ENCODE measurements at regions of chr1 and their contacts with region 1.

Region 1: GRCh38 chr1:156889802-156890585 is 3.5 kb upstream of the PEAR1 start:
- DNase-seq: peak; percentile 79 to 89
- ATAC-seq: peak; percentile 55 to 76 (median 69)
- H3K4me3 ChIP-seq: no peak overlapping the region
- H3K27ac ChIP-seq: no peak overlapping the region
- H3K4me1 ChIP-seq: no peaks in the 10 kb centered on the region
- H3K27me3 ChIP-seq: peaks cover 0 to 29% (median 5%) of the 10 kb centered on the region in 3 donors
- CTCF ChIP-seq: peak; percentile 86

Region 2: GRCh38 chr1:156524481-156524869 is 365.5 kb before region 1 on chr1:
- intact Hi-C with region 1: no loop called
- DNase-seq: no peak
- ATAC-seq: peak in 1 of 4 donors; percentile 17
- H3K4me3 ChIP-seq: no peak overlapping the region
- H3K27ac ChIP-seq: no peak overlapping the region
- H3K4me1 ChIP-seq: no peaks in the 10 kb centered on the region
- H3K27me3 ChIP-seq: no peaks in the 10 kb centered on the region
- CTCF ChIP-seq: no peak

Region 3: GRCh38 chr1:156689035-156689952 is 200.7 kb before region 1 on chr1:
- intact Hi-C with region 1: loop called in 1 of 2 experiments (anchors 10 kb)
- DNase-seq: peak; percentile 76 to 87
- ATAC-seq: peak; percentile 87 to 94 (median 90)
- H3K4me3 ChIP-seq: peak overlapping the region; percentile 48
- H3K27ac ChIP-seq: peak overlapping the region; percentile 12
- H3K4me1 ChIP-seq: peaks cover 16% of the 10 kb centered on the region
- H3K27me3 ChIP-seq: peaks cover 0 to 34% (median 10%) of the 10 kb centered on the region in 3 donors
- CTCF ChIP-seq: peak; percentile 93

Region 4: DNA sequence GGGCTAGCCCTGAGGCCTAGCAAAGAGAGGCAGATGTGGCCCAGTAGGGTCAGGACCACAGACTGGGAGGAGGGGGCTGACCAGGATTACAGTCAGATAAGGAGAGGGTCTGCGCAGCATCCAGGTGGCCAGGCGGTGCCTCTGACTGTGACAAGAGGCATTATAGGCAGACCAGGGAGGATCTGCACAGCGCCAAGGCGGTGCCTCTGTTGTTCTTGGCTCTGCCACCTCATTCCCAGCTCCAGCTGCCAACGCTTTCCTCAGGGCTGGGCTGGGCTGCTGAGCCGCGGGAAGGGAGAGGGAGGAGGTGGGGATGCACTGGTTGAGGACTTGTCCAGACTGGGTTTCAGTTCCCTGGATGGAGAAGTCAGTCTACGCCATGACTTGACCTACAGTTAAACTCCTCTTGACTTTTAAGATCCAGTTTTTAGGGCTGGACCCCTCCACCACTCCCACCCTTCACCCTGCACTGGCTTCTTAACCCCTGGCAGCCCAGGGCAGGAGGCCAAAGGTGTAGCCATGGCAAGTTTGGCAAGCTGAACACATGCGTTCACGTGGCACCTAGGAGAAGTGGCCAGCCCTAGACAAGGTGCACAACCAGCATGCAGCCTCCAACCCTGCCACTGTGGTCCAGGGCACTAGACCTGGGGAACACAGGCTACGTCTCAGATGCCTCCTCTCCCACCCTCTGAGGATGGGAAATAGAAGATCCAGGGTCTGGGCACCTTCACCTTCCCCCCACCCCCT is 180.1 kb before region 1 on chr1:
- intact Hi-C with region 1: loop called in 1 of 2 experiments (anchors 10 kb)
- DNase-seq: peak; percentile 69 to 79
- ATAC-seq: peak; percentile 28 to 60 (median 37)
- H3K4me3 ChIP-seq: no peak overlapping the region
- H3K27ac ChIP-seq: no peak overlapping the region
- H3K4me1 ChIP-seq: peaks cover 14% of the 10 kb centered on the region
- H3K27me3 ChIP-seq: peaks cover 0 to 16% (median 4%) of the 10 kb centered on the region in 3 donors
- CTCF ChIP-seq: no peak

Region 5: GRCh38 chr1:156797212-156797871 is 92.7 kb before region 1 on chr1:
- intact Hi-C with region 1: loop called in 1 of 2 experiments (anchors 2 kb)
- DNase-seq: no peak
- ATAC-seq: peak in 3 of 4 donors; percentile 39 to 63 (median 48)
- H3K4me3 ChIP-seq: no peak overlapping the region
- H3K27ac ChIP-seq: no peak overlapping the region
- H3K4me1 ChIP-seq: peaks cover 23% of the 10 kb centered on the region
- H3K27me3 ChIP-seq: no peaks in the 10 kb centered on the region
- CTCF ChIP-seq: peak; percentile 73

Region 6: DNA sequence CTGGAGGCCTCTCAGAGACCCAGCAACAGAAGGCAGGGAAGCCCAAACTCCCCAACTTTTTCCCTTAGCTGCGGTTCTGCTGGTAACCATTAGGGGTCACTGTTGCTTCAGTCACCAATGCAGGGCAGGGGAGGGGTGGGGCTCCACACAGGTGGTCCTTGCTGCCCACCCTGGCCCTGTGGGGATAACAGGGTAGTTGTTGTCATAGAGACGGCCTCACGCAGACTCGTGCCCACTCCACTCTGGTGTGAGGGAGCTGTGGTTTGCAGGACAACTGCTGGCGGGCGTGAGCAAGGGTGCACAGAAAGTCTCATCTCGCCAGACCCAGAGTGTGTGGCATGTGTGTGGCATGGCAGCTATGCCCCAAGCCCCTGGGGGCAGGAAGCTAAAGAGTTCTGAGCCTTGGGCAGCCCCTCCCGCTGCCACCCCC is 51.0 kb before region 1 on chr1:
- intact Hi-C with region 1: loop called in 1 of 2 experiments (anchors 2 kb)
- DNase-seq: no peak
- ATAC-seq: peak; percentile 59 to 69 (median 62)
- H3K4me3 ChIP-seq: no peak overlapping the region
- H3K27ac ChIP-seq: no peak overlapping the region
- H3K4me1 ChIP-seq: no peaks in the 10 kb centered on the region
- H3K27me3 ChIP-seq: peaks cover 0 to 19% (median 5%) of the 10 kb centered on the region in 3 donors
- CTCF ChIP-seq: peak; percentile 80

Region 7: DNA sequence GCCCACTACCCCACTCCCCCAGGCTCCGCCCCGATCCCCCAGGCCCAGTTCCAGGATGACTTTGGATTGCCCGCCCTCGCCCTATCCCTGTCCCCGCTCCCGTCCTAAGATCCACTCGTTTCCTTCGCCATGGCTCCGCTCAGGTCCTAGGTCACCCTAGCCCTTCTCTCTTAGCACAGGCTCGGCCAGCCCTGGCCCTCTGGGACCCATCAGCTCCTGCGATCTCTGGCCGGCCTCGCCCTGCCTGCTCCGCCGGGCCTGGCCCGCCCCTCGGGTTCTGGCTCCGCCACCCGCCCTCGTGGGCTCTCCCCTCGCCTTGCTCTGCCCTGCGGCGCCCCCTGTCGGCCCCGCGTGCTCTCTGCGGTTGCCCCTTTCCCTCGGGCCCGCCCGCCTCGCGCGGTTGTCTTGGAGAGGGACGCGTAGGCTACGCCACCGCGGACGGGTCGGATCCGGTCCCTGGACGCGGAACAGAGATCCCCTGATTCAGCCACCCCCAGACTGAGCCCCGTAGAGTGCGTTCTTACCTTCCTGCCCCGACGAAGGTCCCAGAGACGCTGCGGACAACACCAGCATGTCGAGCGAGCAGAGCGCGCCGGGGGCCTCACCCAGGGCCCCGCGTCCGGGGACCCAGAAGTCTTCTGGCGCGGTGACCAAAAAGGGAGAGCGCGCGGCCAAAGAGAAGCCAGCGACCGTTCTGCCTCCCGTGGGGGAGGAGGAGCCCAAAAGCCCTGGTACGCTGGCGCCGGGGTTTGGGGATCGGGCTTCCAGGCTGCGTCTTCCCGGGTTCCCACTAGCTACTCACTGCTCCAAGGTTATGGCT is 30.4 kb after region 1 on chr1 and contains the start of gene LRRC71:
- intact Hi-C with region 1: loop called in 1 of 2 experiments (anchors 2 kb)
- DNase-seq: peak; percentile 82 to 90
- ATAC-seq: peak; percentile 81 to 95 (median 92)
- H3K4me3 ChIP-seq: peak within 1 kb of the TSS; percentile 41
- H3K27ac ChIP-seq: no peak within 1 kb of the TSS
- H3K4me1 ChIP-seq: peaks cover 6% of the 10 kb centered on the region
- H3K27me3 ChIP-seq: peaks cover 0 to 59% (median 32%) of the 10 kb centered on the region in 3 donors
- CTCF ChIP-seq: peak; percentile 85
- total RNA-seq, gene LRRC71: not detected

Measured in psoas muscle (tissue), 8 donors.